Activated CD8-positive, alpha-beta T cell treated with anti-CD3 and anti-CD28 coated beads, Interleukin-2, amount 10 ng/mL, durations not matched to agents 7 days and 5 days (primary cell): ENCODE measurements at regions of chr3 and their contacts with region 1.

Region 1: GRCh38 chr3:37308247-37308646 is 133.9 kb upstream of the LRRFIP2 start:
- DNase-seq: no peak
- ATAC-seq: no peak
- H3K4me3 Mint-ChIP-seq: no peak overlapping the region
- H3K27ac Mint-ChIP-seq: no peak overlapping the region
- H3K4me1 Mint-ChIP-seq: peaks cover 15% of the 10 kb centered on the region
- H3K27me3 Mint-ChIP-seq: no peaks in the 10 kb centered on the region

Region 2: GRCh38 chr3:37221407-37221806 is 86.8 kb before region 1 on chr3:
- CTCF ChIA-PET with region 1: no interaction called
- POLR2A ChIA-PET with region 1: no interaction called
- DNase-seq: no peak
- ATAC-seq: no peak
- H3K4me3 Mint-ChIP-seq: no peak overlapping the region
- H3K27ac Mint-ChIP-seq: no peak overlapping the region
- H3K4me1 Mint-ChIP-seq: peaks cover 23% of the 10 kb centered on the region
- H3K27me3 Mint-ChIP-seq: peaks cover 15% of the 10 kb centered on the region

Region 3: DNA sequence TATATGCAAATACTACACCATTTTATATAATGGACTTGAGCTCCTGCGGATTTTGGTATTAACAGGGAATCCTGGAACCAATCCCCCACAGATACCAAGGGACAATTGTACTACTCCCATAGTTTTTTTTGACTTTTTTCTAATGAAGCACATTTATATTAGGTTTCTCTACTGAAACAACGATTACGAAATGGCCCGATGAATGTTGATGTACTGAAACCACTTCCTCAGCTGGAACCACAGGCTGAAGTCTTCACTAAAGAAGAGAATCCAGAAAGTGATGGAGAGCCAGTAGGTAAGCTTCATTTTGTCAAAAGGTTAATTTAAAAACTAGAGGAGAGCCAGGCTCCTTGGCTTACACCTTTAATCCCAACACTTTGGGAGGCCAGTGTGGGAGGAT is 12.3 kb before region 1 on chr3:
- CTCF ChIA-PET with region 1: interaction called, 10 read pairs
- POLR2A ChIA-PET with region 1: no interaction called
- DNase-seq: no peak
- ATAC-seq: no peak
- H3K4me3 Mint-ChIP-seq: no peak overlapping the region
- H3K27ac Mint-ChIP-seq: peak overlapping the region; percentile 32
- H3K4me1 Mint-ChIP-seq: peaks cover 18% of the 10 kb centered on the region
- H3K27me3 Mint-ChIP-seq: no peaks in the 10 kb centered on the region